GM23248 (cell line): ENCODE measurements at regions of chr17 and their contacts with region 1.

Region 1: GRCh38 chr17:62860907-62861848 is 53.1 kb upstream of the MARCHF10 start:
- DNase-seq: no peak
- H3K4me3 ChIP-seq: no peak overlapping the region
- H3K27ac ChIP-seq: no peak overlapping the region
- H3K4me1 ChIP-seq: peaks cover 12% of the 10 kb centered on the region
- H3K27me3 ChIP-seq: no peaks in the 10 kb centered on the region

Region 2: GRCh38 chr17:62778689-62779681 is 82.2 kb before region 1 on chr17:
- in situ Hi-C with region 1: no loop called
- DNase-seq: peak; percentile 98
- H3K4me3 ChIP-seq: peak overlapping the region; percentile 58
- H3K27ac ChIP-seq: peak overlapping the region; percentile 92
- H3K4me1 ChIP-seq: peaks cover 38% of the 10 kb centered on the region
- H3K27me3 ChIP-seq: no peaks in the 10 kb centered on the region

Region 3: GRCh38 chr17:62911114-62911513 is 49.9 kb after region 1 on chr17:
- in situ Hi-C with region 1: loop called (anchors 5 kb)
- DNase-seq: no peak
- H3K4me3 ChIP-seq: no peak overlapping the region
- H3K27ac ChIP-seq: no peak overlapping the region
- H3K4me1 ChIP-seq: no peaks in the 10 kb centered on the region
- H3K27me3 ChIP-seq: no peaks in the 10 kb centered on the region

Region 4: GRCh38 chr17:62968445-62968923 is 107.3 kb after region 1 on chr17:
- in situ Hi-C with region 1: no loop called
- DNase-seq: peak; percentile 94
- H3K4me3 ChIP-seq: peak overlapping the region; percentile 88
- H3K27ac ChIP-seq: no peak overlapping the region
- H3K4me1 ChIP-seq: peaks cover 29% of the 10 kb centered on the region
- H3K27me3 ChIP-seq: no peaks in the 10 kb centered on the region

Region 5: DNA sequence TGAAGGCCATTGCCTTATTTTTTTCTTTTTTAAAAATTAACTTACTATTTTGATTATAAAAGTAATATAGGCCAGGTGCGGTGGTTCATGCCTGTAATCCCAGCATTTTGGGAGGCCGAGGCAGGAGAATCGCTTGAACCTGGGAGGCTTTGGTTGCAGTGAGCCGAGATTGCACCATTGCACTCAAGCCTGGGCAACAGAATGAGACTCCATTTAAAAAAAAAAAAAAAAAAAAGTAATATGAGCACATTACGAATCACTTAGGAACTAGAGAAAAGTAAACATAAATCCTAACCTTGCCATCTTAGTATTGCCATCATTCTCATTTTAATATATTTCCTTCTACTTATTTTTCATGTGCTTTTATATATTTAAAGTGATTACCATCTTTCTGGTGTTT is 726.6 kb after region 1 on chr17:
- in situ Hi-C with region 1: no loop called
- DNase-seq: peak; percentile 31
- H3K4me3 ChIP-seq: no peak overlapping the region
- H3K27ac ChIP-seq: no peak overlapping the region
- H3K4me1 ChIP-seq: no peaks in the 10 kb centered on the region
- H3K27me3 ChIP-seq: no peaks in the 10 kb centered on the region

Region 6: DNA sequence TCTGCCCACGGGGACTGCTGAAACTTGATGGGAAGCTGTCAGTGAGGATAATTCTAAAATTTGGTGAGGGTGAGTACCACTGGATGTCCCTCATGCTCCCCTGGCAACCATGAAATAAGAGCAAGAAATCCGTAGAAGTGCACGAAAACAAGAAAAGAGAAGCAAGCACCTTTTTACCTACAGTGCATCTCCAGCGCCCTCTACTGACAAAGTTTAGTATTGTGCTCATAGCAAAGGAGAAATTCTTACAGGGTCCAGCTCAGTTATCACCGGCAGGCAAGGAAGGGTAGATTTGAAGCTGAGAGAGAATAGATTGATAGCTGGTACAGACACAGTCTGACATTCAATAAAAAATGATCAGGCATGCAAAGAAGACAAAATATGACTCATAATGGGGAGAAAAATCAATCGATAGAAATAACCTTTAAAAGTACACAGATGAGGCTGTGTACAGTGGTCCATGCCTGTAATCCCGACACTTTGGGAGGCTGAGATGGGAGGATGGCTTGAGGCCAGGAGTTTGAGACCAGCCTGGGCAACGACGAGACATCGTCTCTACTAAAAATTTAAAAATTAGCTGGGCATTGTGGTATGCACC is 1430.2 kb after region 1 on chr17:
- in situ Hi-C with region 1: no loop called
- DNase-seq: no peak
- H3K4me3 ChIP-seq: no peak overlapping the region
- H3K27ac ChIP-seq: no peak overlapping the region
- H3K4me1 ChIP-seq: no peaks in the 10 kb centered on the region
- H3K27me3 ChIP-seq: no peaks in the 10 kb centered on the region